AG04450 (cell line): ENCODE measurements at regions of chr17 and their contacts with region 1.

Region 1: GRCh38 chr17:77331301-77331864 is 190.6 kb downstream of the SEC14L1 start:
- DNase-seq: no peak
- H3K4me3 ChIP-seq: no peak overlapping the region
- H3K27ac ChIP-seq: peak overlapping the region; percentile 73
- H3K27me3 ChIP-seq: no peaks in the 10 kb centered on the region
- CTCF ChIP-seq: peak; percentile 93

Region 2: DNA sequence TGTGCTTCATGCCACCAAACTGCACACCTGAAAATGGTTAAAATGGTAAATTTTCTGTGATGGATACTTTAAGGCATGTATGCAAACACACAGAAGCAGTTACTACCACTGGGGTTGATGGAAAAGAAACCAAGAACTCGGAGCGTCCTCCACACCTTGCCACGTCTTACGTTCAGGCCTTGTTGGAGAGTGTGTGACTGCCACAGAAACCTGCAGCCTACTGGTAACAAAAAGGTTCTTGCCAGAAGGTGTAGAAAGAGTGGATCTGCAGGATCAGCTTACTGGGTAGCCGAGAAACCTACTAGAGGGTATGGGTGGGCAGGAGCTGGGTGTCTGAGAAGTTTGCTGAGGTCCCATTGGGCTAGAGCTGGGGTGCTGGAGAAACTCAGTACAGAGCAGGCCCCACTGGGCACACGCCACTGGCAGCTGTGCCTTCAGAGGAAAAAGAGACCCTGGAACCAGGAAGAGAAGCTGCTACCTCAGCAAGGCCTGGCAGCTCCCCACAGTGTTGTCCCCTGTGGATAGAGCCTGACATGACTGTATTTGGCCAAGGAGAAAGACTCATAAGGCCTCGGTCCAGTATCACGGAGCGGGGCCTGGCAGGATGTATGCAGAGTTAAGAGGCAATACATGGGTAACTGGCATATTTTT is 14.0 kb after region 1 on chr17:
- CTCF ChIA-PET with region 1: interaction called, 10 read pairs
- POLR2A ChIA-PET with region 1: interaction called, 4 read pairs
- DNase-seq: no peak
- H3K4me3 ChIP-seq: no peak overlapping the region
- H3K27ac ChIP-seq: no peak overlapping the region
- H3K27me3 ChIP-seq: no peaks in the 10 kb centered on the region
- CTCF ChIP-seq: no peak

Region 3: DNA sequence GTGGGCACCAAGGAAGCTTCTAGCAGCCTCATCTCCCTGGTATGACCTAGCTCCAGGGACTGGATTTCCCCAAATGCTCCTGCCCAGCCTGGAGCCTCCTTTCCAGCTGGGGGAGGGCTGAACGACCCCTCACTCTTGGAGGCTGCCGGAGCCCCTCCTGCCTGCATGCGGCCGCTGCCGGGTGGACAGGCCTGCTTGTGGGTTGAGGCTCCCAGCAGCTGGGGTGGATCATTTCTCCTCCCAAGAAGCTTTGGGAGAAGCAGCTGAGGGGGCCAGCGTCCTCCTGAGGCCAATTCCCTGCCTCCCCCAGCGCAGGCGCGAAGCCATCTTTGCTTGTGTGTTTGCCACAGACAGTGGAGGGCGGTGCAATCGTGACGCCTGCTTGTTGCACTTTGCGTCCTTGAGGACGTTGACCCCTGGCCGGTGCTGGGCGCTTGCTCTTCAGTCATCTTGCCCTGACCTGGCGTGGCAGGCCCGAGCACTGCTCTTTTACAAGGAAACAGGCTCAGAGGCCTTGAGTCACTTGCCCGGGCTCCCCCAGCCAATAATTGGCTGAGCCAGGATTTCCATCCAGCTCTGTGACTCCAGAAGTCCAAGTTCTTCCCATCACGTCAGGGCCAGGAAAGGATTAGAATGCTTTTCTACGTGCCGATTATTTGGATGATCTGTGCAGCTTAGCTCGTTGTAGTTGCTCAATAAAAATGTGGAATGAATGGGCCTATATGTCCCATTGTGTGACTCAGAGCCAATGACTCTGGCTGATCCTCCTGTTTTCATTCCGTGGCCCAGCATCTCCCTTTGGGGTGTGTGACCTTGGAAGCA is 23.2 kb after region 1 on chr17:
- CTCF ChIA-PET with region 1: interaction called, 11 read pairs
- POLR2A ChIA-PET with region 1: no interaction called
- DNase-seq: peak; percentile 90
- H3K4me3 ChIP-seq: no peak overlapping the region
- H3K27ac ChIP-seq: peak overlapping the region; percentile 98
- H3K27me3 ChIP-seq: no peaks in the 10 kb centered on the region
- CTCF ChIP-seq: no peak

Region 4: DNA sequence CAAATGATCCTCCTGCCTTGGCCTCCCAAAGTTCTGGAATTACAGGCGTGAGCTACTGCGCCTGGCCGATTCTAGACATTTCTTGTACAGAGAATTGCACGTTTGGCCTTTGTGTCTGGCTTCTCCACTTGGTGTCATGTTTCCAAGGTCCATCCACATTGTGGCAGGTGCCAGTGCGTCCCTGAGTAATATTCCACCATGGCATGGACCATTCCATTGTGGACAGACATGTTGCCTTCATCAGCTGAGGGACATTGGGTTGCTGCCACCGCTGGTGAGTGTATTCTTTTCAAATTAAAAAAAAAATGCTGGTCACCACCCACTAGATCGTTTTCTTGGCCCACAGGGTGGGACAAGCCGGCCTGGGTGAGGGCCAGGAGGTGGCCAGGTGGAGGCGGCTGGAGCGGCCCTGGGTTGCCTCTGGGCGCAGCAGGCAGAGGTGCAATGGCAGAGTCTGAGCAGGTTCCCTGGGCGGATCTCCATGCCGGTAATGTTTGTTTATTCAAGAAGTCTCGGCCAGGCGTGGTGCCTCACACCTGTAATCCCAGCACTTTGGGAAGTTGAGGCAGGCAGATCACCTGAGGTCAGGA is 83.5 kb after region 1 on chr17:
- CTCF ChIA-PET with region 1: interaction called, 23 read pairs
- POLR2A ChIA-PET with region 1: interaction called, 5 read pairs
- DNase-seq: no peak
- H3K4me3 ChIP-seq: no peak overlapping the region
- H3K27ac ChIP-seq: no peak overlapping the region
- H3K27me3 ChIP-seq: no peaks in the 10 kb centered on the region
- CTCF ChIP-seq: no peak

Region 5: DNA sequence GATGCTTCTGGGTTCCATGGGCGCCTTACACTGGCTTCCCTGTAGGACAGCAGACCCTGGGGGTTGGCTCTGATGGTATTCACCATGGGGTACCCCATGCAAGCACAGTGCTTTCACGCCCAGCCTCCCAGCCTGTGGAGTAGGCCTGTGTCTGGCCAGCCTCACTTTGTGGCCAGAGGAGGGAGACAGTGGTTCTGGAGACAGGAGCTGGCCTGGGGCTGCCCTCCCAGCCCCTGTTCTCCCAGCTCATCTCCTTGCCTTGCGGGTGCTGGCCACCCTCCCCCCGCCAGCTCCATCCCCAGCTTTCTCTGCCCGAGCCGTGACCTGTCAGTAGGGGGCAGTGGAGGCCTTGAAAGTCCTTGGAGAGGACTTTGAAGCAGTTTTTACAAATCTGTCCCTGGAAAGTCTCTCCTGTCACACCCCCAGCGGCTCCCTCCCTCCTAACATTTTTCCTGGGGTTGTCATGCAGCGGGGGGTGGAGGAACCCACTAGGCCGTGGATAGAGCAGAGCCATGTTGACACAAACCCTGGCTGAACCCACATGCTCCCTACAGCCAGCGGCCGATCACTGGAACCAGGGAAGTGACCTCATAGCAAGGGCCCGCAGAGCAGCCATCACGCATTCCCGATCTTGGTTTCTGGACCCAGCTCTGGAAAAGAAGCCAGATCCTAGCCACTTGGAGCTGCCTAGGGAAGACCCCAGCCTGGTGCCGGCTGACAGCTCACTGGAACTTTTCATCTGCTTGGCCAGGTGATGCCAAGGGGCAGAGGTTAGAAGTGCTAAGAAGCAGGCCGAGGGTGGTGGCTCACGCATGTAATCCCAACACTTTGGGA is 98.8 kb after region 1 on chr17:
- CTCF ChIA-PET with region 1: interaction called, 51 read pairs
- POLR2A ChIA-PET with region 1: interaction called, 9 read pairs
- DNase-seq: peak; percentile 96
- H3K4me3 ChIP-seq: no peak overlapping the region
- H3K27ac ChIP-seq: peak overlapping the region; percentile 96
- H3K27me3 ChIP-seq: no peaks in the 10 kb centered on the region
- CTCF ChIP-seq: peak; percentile 89

Region 6: DNA sequence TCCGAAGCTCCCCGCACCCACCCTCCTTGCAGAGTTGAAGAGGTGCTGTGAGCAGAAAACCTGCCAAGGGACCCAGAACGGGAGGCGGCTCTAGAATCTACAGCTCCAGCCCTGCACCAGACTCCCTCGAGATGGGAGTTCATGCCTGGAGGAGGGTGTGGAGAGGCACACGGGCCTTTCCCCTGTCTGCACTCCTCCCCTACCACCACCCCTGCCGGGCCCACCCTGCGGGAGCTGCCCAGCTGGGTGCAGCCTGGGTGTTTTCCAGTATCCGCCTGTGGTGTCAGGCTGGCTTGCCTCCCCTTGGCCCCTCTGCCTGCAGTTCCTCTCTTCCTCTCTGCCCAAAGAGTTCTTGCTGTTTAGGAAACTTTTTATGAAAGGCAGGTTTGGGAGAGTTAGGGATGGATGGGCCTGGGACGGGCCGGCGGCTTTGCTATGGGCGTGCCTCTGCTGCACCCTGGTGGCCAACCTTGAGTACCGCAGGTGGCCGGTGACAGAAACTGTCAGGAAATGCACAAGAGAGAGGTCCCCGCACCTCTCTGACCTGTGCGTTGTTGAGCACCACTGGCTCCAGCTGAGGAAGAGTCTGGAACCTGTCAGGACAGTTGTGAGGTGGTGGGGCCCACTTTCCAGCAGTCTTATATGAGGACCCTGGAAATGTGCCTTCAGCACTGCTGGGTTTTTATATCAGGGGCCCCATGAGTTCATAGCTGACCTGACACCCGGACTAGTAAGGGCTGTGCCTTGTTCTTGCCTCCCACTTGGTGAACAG is 163.5 kb after region 1 on chr17:
- CTCF ChIA-PET with region 1: interaction called, 21 read pairs
- POLR2A ChIA-PET with region 1: no interaction called
- DNase-seq: peak; percentile 46
- H3K4me3 ChIP-seq: no peak overlapping the region
- H3K27ac ChIP-seq: peak overlapping the region; percentile 39
- H3K27me3 ChIP-seq: no peaks in the 10 kb centered on the region
- CTCF ChIP-seq: peak; percentile 97